PC-3 (cell line): ENCODE measurements at regions of chr7 and their contacts with region 1.

Region 1: DNA sequence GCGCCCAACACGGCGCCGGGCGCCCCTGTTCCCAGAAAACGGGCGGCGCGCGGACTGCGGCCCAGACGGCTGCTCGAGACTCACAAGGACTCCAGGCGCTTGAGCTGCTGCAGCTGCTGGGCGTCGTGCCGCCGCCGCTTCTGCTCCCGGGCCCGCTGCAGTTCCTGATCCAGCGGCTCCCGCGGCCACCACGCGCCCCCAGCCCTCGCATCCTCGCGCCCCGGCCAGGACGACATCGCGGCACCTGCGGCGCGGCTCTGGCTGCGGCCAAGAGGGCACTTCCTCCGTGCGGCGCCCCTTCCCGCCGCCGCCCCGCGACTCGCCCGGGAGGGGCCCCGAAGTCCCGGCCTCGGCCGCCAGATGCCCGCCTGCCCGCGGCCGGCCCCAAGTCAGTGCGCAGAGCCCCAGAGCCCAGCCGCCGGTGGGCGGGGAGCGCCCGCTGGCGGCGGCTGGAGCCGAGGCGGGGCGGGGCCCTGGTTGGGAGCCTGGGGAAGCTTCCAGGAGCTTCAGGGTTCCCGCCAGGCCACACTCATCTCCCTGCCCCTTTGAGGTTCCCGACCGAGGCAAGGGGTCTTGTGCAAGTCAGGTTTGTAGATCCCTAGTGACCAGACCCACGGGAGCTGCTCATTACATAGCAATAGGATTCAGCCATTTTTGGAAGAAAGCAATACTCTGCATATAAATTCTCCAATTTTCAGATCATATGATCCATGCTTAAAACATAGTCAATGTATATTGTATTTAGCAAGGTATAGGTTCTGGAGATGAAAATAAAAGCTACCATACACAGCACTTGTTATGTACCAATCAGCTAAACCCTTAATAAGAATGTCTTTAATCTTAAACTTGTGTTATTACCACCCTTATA is 14.2 kb upstream of the FKBP9 start:
- DNase-seq: peak; percentile 66
- ATAC-seq: peak; percentile 98
- H3K4me3 ChIP-seq: peak overlapping the region; percentile 65
- H3K27ac ChIP-seq: no peak overlapping the region
- H3K4me1 ChIP-seq: peaks cover 3% of the 10 kb centered on the region; the same call in 1 of the 2 replicates
- H3K27me3 ChIP-seq: no peaks in the 10 kb centered on the region
- CTCF ChIP-seq: peak; percentile 45; the same call in 1 of the 2 replicates

Region 2: DNA sequence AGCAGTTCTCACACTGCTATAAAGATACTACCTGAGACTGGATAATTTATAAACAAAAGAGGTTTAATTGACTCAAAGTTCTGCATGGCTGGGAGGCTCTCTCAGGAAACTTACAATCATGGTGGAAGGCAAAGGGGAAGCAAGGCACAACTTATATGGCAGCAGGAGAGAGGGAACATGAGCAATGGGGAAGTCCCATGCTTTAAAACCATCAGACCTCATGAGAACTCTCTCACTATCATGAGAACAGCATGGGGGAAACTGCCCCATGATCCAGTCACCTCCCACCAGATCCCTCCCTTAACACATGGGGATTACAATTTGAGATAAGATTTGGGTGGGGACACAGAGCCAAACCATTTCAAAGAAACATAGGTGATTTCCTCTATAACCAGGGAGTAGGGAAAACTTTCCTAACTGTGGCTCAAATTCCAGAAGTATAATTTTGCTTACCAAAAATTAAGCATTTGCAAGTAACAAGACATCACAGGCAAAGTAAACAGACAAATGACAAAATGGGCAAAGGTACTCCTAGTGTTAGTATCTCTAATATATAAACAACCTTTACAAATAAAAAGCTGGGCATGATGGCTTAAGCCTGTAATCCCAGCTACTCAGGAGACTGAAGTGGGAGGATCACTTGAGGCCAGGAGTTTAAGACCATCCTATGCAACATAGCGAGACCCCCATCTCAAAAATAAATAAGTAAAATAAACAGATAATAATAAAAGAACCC is 139.4 kb before region 1 on chr7:
- CTCF ChIA-PET with region 1: interaction called, 3 read pairs
- POLR2A ChIA-PET with region 1: no interaction called
- intact Hi-C with region 1: loop called (anchors 1 kb)
- DNase-seq: no peak
- ATAC-seq: no peak
- H3K4me3 ChIP-seq: no peak overlapping the region
- H3K27ac ChIP-seq: no peak overlapping the region
- H3K4me1 ChIP-seq: no peaks in the 10 kb centered on the region
- H3K27me3 ChIP-seq: no peaks in the 10 kb centered on the region
- CTCF ChIP-seq: no peak

Region 3: DNA sequence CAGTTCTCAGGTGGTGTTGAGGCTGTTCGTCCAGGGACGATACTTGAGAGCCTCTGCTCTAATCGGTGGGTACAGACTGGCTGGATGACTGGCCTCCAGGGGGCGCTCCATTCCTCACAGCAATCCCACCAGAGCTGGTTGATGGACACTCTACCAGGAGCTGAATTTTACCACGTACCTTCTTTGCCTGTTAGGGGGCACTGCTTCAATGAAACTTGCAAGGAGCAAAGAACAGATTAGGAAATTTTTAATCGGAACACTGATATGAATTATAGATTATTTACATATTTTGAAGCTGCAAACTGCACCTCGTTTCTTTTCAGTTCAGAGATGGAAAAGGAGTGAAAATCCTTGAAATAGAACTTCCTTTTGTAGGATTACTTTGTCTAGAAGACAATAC is 96.3 kb before region 1 on chr7:
- CTCF ChIA-PET with region 1: interaction called, 6 read pairs
- POLR2A ChIA-PET with region 1: no interaction called
- intact Hi-C with region 1: loop called (anchors 1 kb)
- DNase-seq: peak; percentile 81
- ATAC-seq: peak; percentile 100
- H3K4me3 ChIP-seq: no peak overlapping the region
- H3K27ac ChIP-seq: no peak overlapping the region
- H3K4me1 ChIP-seq: no peaks in the 10 kb centered on the region
- H3K27me3 ChIP-seq: no peaks in the 10 kb centered on the region
- CTCF ChIP-seq: peak; percentile 87